ENCODE measurements at regions of chr16 and their contacts with region 1.

Region 1: DNA sequence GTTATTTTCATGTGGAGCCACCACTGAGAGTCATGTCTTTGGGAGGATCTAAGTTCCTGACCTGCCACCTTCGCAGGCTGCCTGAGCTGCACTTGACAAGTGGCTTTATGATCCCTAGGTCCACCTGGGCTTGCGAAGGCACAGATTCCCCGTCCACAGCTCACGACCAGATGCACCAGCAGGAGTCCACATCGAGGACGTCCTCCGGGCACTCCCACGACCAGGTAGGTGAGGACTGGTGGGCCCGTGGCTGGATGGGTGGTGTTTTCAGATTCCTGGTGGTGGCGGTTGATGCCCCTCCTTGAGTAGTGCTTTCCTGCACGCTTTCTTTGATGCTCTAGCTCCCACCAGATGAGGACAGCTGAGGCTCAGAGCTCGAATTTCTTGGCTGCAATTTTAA is 14.8 kb downstream of the FAM234A start:
- DNase-seq: no peak
- H3K4me3 ChIP-seq: no peak overlapping the region
- CTCF ChIP-seq: no peak

Region 2: GRCh38 chr16:200388-200787 is 49.0 kb before region 1 on chr16:
- in situ Hi-C with region 1: loop called (anchors 5 kb)
- DNase-seq: no peak
- H3K4me3 ChIP-seq: no peak overlapping the region
- CTCF ChIP-seq: no peak

Region 3: DNA sequence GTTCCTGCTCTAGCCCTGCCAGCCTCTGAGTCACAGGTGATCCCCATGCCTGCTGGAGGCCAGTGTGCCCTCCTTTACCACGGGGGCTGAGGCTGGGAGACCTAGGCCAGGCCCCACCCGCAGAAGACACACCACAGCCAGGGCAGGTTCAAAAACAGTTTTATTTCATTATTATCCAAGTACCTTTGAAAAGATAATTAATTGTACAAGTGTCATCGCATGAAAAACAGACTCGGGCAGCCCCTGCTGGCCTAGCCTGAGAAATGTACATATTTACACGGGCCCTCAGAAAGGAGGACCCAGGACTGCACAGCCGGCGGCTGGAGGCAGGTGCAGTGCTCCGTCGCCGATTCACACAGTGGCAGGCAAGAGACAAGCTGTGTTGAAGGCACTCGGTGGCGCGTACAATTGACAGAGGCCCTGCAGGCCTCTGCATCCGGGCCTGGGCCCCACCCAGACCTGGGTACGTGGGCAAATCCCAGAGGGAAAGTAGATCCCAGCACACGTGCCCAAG is 37.9 kb after region 1 on chr16:
- in situ Hi-C with region 1: loop called (anchors 5 kb)
- DNase-seq: no peak
- H3K4me3 ChIP-seq: no peak overlapping the region
- CTCF ChIP-seq: peak; percentile 17

Measured in astrocyte of the cerebellum (primary cell).